ENCODE measurements at regions of chr10 and their contacts with region 1.

Region 1: GRCh38 chr10:74314166-74314565 is 163.1 kb downstream of the ADK start:
- DNase-seq: no peak

Region 2: GRCh38 chr10:74418285-74418872 is 104.2 kb after region 1 on chr10:
- intact Hi-C with region 1: no loop called
- DNase-seq: no peak

Region 3: GRCh38 chr10:75195035-75195763 is 881.0 kb after region 1 on chr10:
- intact Hi-C with region 1: loop called in 1 of 2 experiments (anchors 5 kb)
- DNase-seq: no peak

Region 4: GRCh38 chr10:75733135-75733890 is 1419.1 kb after region 1 on chr10:
- intact Hi-C with region 1: no loop called
- DNase-seq: no peak

Measured in posterior vena cava (tissue), 2 donors.